Head of caudate nucleus (tissue), 42 donors: ENCODE measurements at regions of chr10 and their contacts with region 1.

Region 1: DNA sequence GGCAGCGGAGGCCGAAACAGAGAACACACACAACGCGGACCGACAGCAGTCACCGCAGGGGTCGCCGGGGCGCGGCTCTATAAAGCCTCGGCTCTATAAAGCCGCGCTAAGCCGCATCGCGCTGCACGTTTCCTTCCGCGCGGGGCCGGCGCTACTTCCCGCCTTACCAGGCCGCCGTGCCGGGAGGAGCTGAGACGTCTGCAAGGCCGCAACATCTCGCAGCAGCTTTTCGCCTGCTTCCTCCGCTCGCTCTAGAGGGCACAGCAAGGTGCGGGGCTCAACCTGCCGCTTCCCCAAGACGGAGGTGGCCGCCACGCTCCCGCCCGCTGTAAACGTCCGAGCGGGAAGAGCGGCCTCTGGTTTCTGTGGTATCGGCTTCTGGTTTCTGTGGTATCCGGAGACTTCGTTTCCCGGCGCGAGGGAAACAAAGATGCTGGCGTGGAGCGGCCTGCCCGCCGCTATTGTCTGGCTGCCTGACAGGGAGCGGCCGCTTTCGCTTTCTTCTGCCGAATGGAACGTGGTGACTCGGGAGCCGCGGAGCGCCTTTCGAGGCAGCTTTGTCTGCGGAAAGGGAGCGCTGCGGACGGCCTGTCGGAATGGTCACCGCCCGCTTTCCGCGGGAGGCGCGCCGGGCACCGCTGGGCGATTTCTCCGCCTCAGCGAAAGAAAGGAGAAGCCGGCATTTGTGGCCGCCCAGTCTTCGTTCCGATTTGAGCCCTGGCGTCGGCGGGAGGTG is 91.8 kb downstream of the SPAG6 start:
- DNase-seq: peak; percentile 86 to 97 (median 92)

Region 2: GRCh38 chr10:22251751-22252223 is 185.3 kb before region 1 on chr10:
- intact Hi-C with region 1: loop called (anchors 5 kb)
- DNase-seq: peak; percentile 55 to 91 (median 79)

Region 3: DNA sequence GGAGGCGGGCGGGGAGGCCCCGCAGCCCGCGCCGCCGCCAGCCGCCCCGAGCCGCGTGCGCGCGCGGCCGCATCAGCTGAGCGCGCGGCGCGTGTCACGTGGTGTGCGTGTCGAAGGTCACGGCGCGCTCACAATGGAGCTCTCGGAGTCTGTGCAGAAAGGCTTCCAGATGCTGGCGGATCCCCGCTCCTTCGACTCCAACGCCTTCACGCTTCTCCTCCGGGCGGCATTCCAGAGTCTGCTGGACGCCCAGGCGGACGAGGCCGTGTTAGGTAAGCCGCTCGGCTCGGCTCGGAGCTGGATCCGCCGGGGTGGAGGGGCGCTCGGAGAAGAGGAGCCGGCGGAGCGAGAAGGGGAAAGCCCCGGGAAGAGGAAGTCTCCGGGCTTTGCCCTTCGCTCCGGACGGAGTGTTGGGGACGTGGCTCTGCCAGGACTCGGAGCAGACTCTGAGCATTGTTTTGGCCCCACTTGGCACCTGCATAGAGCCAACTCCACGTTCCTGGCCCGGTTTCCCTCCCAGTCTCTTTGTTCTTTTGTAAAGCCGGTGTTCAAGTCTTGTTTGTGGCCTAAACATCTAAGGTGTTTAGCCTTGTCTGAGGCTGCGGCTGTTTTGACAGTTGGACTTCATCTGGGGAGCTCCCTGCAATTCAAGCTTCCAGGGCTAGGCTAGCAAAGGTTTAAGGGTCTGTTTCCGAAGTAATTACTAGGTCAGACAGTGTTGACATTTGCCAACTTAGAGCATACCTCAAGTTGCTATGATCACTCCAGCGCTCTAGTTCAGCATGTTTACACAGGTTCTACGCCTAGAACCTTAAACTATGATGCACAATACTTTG is 120.5 kb before region 1 on chr10 and contains the start of gene COMMD3:
- intact Hi-C with region 1: loop called (anchors 5 kb)
- DNase-seq: peak; percentile 77 to 95 (median 90)

Region 4: DNA sequence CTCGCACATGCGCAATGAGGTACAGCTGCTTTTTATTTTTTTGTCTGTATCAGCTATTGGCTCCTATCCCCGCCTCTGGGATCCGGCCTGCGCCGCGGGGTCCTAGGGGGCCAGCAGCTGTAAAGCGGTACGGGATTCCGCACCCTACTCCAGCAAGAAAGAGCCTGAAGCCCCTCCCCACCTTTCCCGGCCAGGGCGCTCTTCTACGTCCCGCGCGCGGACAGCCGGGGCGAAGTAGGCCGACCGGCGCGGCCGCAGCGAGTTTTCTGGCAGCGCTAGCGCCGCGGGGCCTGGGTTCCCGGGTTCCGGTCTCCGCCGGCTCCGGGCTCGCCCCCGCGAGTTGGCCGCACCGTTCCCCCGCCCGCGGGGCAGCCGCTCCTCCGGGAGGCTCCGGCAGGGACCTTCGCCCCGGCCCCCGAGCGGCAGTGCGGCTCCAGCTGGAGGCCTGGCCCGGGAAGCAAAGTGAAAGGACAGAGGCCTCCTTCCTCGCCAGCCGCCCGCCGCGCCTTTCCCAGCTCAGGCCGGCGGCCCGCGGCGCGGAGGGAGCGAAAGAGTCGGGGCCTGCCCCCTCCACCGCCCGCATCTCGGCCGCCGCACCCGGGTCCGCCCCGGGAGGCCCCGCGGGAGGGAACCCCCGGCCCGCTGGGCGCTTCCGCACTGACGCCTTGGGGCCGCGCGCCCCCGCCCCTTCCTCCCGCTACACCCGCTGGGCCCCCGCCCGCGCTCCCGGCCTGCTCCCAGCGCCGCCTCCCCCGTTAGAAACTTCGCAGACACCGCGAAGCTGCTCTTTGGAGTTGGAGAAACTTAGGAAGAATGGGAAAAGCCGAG is 96.5 kb before region 1 on chr10:
- intact Hi-C with region 1: loop called (anchors 5 kb)
- DNase-seq: peak; percentile 24 to 84 (median 72)

Region 5: DNA sequence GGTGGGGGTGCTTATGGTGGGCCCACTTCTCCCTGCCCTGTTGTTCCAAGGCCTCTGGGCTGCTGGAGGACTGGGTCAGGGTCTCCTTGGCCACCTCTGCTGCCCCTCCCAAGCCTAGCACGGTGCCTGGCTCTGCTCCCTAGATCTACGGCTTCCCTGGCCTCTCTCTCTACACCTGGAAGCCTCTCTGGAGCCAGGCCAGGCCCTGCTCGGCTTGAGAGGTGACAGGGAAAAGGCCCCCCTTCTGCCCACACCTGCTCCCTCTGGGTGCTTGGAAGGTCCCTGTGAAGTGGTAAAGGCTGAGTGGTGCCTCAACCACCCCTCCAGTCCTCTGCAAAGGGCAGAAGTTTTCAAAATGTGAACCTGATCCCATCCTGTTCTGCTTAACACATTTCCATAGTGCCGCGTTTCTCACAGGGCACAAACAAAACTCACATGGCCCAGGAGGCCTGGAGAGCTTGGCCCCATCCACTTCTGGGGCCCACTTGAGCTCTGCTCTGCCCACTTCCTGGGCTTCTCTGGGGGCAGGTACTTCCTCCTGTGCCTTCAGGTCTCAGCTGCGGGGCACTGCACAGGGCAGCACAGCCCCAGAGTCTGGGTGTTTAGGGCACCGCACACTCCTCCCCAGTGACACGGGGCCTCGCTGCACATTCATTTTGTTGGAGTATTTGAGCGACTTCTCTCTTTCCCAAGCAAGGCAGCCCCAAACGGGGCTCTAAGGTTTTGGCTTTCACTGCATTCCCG is 107.4 kb after region 1 on chr10:
- intact Hi-C with region 1: loop called (anchors 10 kb)
- DNase-seq: no peak